ENCODE measurements at regions of chr4 and their contacts with region 1.

Region 1: GRCh38 chr4:87465739-87466366 is 43.5 kb downstream of the NUDT9 start:
- DNase-seq: peak; percentile 9
- ATAC-seq: peak; percentile 74
- H3K4me3 ChIP-seq: no peak overlapping the region
- H3K27ac ChIP-seq: no peak overlapping the region
- H3K4me1 ChIP-seq: no peaks in the 10 kb centered on the region
- H3K27me3 ChIP-seq: no peaks in the 10 kb centered on the region
- CTCF ChIP-seq: peak; percentile 35 to 65 (median 52); a peak in 5 of 6 replicates
- EP300 ChIP-seq: no peak
- POLR2A ChIP-seq: no peak
- RAD21 ChIP-seq: peak; percentile 91

Region 2: GRCh38 chr4:87235020-87235671 is 230.7 kb before region 1 on chr4:
- CTCF ChIA-PET with region 1: interaction called, 3 read pairs
- POLR2A ChIA-PET with region 1: no interaction called
- RAD21 ChIA-PET with region 1: interaction called, 3 read pairs
- SMC1A ChIA-PET with region 1: interaction called, 5 read pairs
- in situ Hi-C with region 1: no loop called
- intact Hi-C with region 1: loop called (anchors 5 kb)
- DNase-seq: no peak
- ATAC-seq: peak; percentile 32; the same call in 2 of the 3 replicates
- H3K4me3 ChIP-seq: peak overlapping the region; percentile 66; the same call in 1 of the 2 replicates
- H3K27ac ChIP-seq: no peak overlapping the region
- H3K4me1 ChIP-seq: no peaks in the 10 kb centered on the region; the same call in 1 of the 2 replicates
- H3K27me3 ChIP-seq: no peaks in the 10 kb centered on the region
- CTCF ChIP-seq: no peak
- EP300 ChIP-seq: no peak
- POLR2A ChIP-seq: no peak
- RAD21 ChIP-seq: no peak

Region 3: DNA sequence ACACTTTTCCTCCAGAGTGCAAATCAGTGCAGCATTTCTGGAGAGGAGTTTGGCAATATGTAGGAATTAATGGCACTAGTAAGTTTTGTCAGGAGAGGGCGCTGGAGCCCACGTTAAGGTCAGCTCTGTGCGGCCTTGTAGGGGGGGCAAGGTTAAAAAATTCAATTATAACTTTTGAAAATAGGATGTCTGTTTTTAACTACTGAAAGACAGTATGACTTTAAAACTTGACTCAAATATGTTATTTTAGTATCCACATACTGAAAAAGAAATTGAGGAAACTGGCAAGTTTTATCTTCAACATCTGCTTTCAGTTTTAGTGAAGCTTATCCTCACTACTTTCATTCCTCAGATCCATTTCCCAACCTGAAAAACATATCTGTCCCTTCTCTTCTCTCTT is 112.3 kb before region 1 on chr4:
- CTCF ChIA-PET with region 1: interaction called, 75 read pairs
- POLR2A ChIA-PET with region 1: interaction called, 5 read pairs
- RAD21 ChIA-PET with region 1: interaction called, 27 read pairs
- SMC1A ChIA-PET with region 1: interaction called, 21 read pairs
- in situ Hi-C with region 1: no loop called
- intact Hi-C with region 1: loop called (anchors 5 kb)
- DNase-seq: peak; percentile 13
- ATAC-seq: peak; percentile 83
- H3K4me3 ChIP-seq: no peak overlapping the region
- H3K27ac ChIP-seq: no peak overlapping the region
- H3K4me1 ChIP-seq: peaks cover 9% of the 10 kb centered on the region
- H3K27me3 ChIP-seq: no peaks in the 10 kb centered on the region
- CTCF ChIP-seq: peak; percentile 51 to 74 (median 66); a peak in 5 of 6 replicates
- EP300 ChIP-seq: no peak
- POLR2A ChIP-seq: no peak
- RAD21 ChIP-seq: peak; percentile 84

Region 4: GRCh38 chr4:87375719-87376291 is 90.0 kb before region 1 on chr4:
- CTCF ChIA-PET with region 1: interaction called, 201 read pairs
- POLR2A ChIA-PET with region 1: no interaction called
- RAD21 ChIA-PET with region 1: interaction called, 80 read pairs
- SMC1A ChIA-PET with region 1: interaction called, 110 read pairs
- in situ Hi-C with region 1: loop called (anchors 5 kb)
- intact Hi-C with region 1: loop called (anchors 1 kb)
- DNase-seq: no peak
- ATAC-seq: peak; percentile 81
- H3K4me3 ChIP-seq: no peak overlapping the region
- H3K27ac ChIP-seq: no peak overlapping the region
- H3K4me1 ChIP-seq: no peaks in the 10 kb centered on the region
- H3K27me3 ChIP-seq: no peaks in the 10 kb centered on the region
- CTCF ChIP-seq: peak; percentile 64 to 76 (median 65)
- EP300 ChIP-seq: no peak
- POLR2A ChIP-seq: no peak
- RAD21 ChIP-seq: peak; percentile 86

Region 5: DNA sequence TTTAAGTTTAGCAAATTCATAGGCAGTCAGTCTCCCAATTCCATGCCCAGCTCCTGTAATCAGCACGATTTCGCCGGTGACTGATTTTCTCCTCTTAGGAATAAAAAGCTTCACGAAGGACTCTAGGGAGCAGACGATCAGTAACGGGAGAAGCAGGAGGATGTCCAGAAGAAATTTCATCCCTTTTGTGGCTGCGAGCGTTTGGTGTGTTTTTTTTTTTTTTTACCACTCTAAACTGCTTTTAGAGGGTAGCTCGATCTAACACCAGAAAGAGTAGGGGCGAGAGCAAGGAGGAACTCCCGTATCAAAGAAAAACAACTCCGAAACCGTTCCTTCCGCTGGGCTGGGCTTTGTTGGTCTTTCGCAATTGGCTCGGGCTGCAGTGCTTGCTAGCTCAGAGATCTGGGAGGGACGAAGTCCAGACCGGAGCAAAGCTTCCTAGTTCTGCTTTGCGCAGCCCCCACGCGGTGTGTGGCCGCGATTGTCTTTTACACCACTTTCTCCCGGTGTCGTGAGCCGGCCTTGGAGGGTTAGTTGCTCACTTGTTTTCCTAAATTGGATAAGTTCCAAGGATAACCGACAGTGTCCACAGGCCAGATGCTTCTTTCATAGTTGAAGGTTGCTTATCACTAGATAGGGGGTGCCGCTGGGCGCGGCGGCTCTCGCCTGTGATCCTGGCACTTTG is 74.8 kb before region 1 on chr4 and contains the start of gene HSD17B11:
- CTCF ChIA-PET with region 1: interaction called, 43 read pairs
- POLR2A ChIA-PET with region 1: no interaction called
- RAD21 ChIA-PET with region 1: interaction called, 7 read pairs
- SMC1A ChIA-PET with region 1: interaction called, 16 read pairs
- in situ Hi-C with region 1: no loop called
- intact Hi-C with region 1: no loop called
- DNase-seq: peak; percentile 86
- ATAC-seq: peak; percentile 98
- H3K4me3 ChIP-seq: peak within 1 kb of the TSS; percentile 83
- H3K27ac ChIP-seq: peak within 1 kb of the TSS; percentile 71
- H3K4me1 ChIP-seq: peaks cover 3% of the 10 kb centered on the region; the same call in 1 of the 2 replicates
- H3K27me3 ChIP-seq: no peaks in the 10 kb centered on the region
- CTCF ChIP-seq: peak; percentile 5 to 14 (median 8); a peak in 3 of 6 replicates
- EP300 ChIP-seq: no peak
- POLR2A ChIP-seq: peak; percentile 92
- RAD21 ChIP-seq: 0 out of 2 replicates have a peak, but pooled peaks have one; percentile 5
- polyA plus RNA-seq, gene HSD17B11: 24.4 to 29.5 TPM

Region 6: DNA sequence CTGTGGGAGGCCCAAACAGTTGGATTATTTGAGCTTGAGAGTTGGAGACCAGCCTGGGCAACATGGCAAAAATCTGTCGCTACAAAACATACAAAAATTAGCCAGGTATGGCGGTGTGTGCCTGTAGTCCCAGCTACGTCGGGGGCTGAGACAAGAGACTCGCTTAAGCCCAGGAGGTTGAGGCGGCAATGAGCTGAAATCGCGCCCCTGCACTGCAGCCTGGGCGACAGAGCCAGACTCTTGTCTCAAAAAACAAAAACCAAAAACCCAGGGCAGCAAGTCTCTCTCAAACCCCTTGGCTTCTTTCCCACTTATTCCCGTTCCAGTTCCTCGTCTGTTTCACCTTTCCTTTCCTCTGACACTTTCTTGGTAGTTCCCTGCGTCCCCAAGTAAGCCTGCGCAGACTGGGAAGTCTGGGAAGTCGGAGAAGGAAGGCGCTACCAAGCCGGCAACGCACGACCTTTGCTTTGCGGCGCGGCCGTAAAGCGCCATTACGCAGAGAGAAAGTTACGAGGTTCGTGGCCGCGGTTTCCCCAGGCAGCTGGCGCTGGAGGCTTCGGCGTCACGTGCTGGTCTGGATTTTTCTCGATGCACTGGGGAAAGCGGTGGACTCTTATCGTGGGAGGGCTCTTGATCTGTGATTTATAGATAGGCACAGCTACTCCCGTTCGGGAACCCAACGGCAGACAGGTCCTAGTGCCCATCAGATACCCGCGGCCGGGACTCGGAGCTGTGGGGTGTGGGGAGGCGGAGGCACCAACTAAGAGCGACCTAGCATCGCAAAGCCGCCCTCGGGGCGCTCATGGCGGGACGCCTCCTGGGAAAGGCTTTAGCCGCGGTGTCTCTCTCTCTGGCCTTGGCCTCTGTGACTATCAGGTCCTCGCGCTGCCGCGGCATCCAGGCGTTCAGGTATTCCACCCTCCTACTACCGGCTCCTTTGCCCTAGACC is 43.5 kb before region 1 on chr4 and contains the start of gene NUDT9:
- CTCF ChIA-PET with region 1: interaction called, 4 read pairs
- POLR2A ChIA-PET with region 1: no interaction called
- RAD21 ChIA-PET with region 1: interaction called, 4 read pairs
- SMC1A ChIA-PET with region 1: interaction called, 3 read pairs
- in situ Hi-C with region 1: no loop called
- intact Hi-C with region 1: loop called (anchors 2 kb)
- DNase-seq: peak; percentile 64
- ATAC-seq: peak; percentile 93
- H3K4me3 ChIP-seq: peak within 1 kb of the TSS; percentile 96
- H3K27ac ChIP-seq: peak within 1 kb of the TSS; percentile 91
- H3K4me1 ChIP-seq: no peaks in the 10 kb centered on the region
- H3K27me3 ChIP-seq: no peaks in the 10 kb centered on the region
- CTCF ChIP-seq: no peak
- EP300 ChIP-seq: peak in 1 of 2 experiments; percentile 62; a peak in 1 of 4 replicates
- POLR2A ChIP-seq: peak; percentile 86
- RAD21 ChIP-seq: no peak
- polyA plus RNA-seq, gene NUDT9: 8.4 to 15.6 TPM

Region 7: GRCh38 chr4:87476934-87477333 is 11.1 kb after region 1 on chr4:
- CTCF ChIA-PET with region 1: interaction called, 10 read pairs
- POLR2A ChIA-PET with region 1: no interaction called
- RAD21 ChIA-PET with region 1: no interaction called
- SMC1A ChIA-PET with region 1: interaction called, 4 read pairs
- in situ Hi-C with region 1: no loop called
- intact Hi-C with region 1: no loop called
- DNase-seq: no peak
- ATAC-seq: no peak
- H3K4me3 ChIP-seq: no peak overlapping the region
- H3K27ac ChIP-seq: no peak overlapping the region
- H3K4me1 ChIP-seq: no peaks in the 10 kb centered on the region
- H3K27me3 ChIP-seq: no peaks in the 10 kb centered on the region
- CTCF ChIP-seq: no peak
- EP300 ChIP-seq: no peak
- POLR2A ChIP-seq: no peak
- RAD21 ChIP-seq: no peak

Region 8: GRCh38 chr4:87551361-87551760 is 85.5 kb after region 1 on chr4:
- CTCF ChIA-PET with region 1: no interaction called
- POLR2A ChIA-PET with region 1: no interaction called
- RAD21 ChIA-PET with region 1: no interaction called
- SMC1A ChIA-PET with region 1: no interaction called
- in situ Hi-C with region 1: no loop called
- intact Hi-C with region 1: no loop called
- DNase-seq: no peak
- ATAC-seq: no peak
- H3K4me3 ChIP-seq: no peak overlapping the region
- H3K27ac ChIP-seq: no peak overlapping the region
- H3K4me1 ChIP-seq: no peaks in the 10 kb centered on the region
- H3K27me3 ChIP-seq: no peaks in the 10 kb centered on the region; a peak in 1 of 4 replicates
- CTCF ChIP-seq: no peak
- EP300 ChIP-seq: no peak
- POLR2A ChIP-seq: no peak
- RAD21 ChIP-seq: no peak

Measured in GM12878 (cell line).